Ascending aorta (tissue), 2 donors: ENCODE measurements at regions of chr12 and their contacts with region 1.

Region 1: GRCh38 chr12:11576104-11576503 is 73.4 kb upstream of the ETV6 start:
- DNase-seq: no peak
- H3K4me3 ChIP-seq: no peak overlapping the region
- H3K27ac ChIP-seq: no peak overlapping the region
- H3K4me1 ChIP-seq: peaks cover 6 to 31% of the 10 kb centered on the region in 2 donors
- H3K27me3 ChIP-seq: no peaks in the 10 kb centered on the region
- CTCF ChIP-seq: no peak

Region 2: DNA sequence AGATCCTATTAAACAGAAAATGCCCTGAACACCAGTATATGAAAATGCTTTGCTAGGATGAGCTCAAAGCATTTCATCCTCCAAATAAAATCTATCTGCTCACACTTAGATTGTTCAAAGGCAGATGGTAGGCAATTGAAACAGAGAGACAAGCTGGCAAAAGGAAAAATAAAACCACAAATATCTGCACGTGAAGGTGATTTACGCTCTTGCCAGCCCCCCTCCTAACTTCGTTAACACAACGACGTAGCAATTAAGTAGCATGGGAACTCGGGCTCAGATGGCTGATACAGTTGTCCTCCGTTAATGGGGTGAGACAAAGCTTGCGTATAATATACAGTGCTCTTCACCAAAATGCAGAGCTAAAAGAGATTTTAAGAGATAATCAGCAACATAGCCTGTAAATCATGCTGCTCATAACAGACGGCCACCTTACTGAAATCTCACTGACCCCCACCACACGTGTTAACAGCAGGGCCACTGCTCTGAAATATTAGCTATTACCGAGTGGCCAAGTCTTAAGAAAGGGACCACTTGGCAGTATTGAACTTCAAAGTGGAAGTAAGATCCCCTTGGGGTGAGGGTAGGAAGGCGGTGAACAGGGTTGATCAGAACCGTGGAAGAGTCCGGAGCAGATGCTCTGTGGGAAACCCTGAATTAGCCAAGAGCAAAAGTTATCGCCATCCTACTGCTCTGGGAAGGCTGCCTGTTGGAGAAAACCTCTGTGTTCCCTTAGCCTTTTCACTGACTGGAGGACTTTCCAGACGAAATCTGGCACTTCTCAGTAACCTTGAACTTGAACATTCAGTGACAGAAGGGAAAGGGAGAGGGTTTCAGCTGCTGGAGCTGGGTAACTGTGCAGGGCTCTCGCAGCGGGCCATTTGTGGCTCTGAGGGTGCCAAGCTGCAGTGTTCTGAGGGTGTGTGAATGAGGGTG is 96.4 kb after region 1 on chr12:
- intact Hi-C with region 1: no loop called
- DNase-seq: no peak
- H3K4me3 ChIP-seq: peak overlapping the region; percentile 17 to 31
- H3K27ac ChIP-seq: peak overlapping the region; percentile 38 to 51
- H3K4me1 ChIP-seq: peaks cover 4 to 52% of the 10 kb centered on the region in 2 donors
- H3K27me3 ChIP-seq: no peaks in the 10 kb centered on the region
- CTCF ChIP-seq: no peak

Region 3: GRCh38 chr12:12356886-12357718 is 781.0 kb after region 1 on chr12 and contains the start of gene BORCS5:
- intact Hi-C with region 1: loop called (anchors 10 kb)
- DNase-seq: peak; percentile 92 to 99
- H3K4me3 ChIP-seq: peak within 1 kb of the TSS; percentile 74 to 82
- H3K27ac ChIP-seq: peak within 1 kb of the TSS; percentile 91 to 98
- H3K4me1 ChIP-seq: peaks cover 0 to 14% of the 10 kb centered on the region in 2 donors
- H3K27me3 ChIP-seq: no peaks in the 10 kb centered on the region
- CTCF ChIP-seq: peak in 2 of 3 experiments; percentile 21 to 24
- total RNA-seq, gene BORCS5: 3.0 TPM

Region 4: GRCh38 chr12:12716793-12717585 is 1140.9 kb after region 1 on chr12 and contains the start of gene CDKN1B:
- intact Hi-C with region 1: loop called (anchors 10 kb)
- DNase-seq: peak; percentile 76 to 96
- H3K4me3 ChIP-seq: peak within 1 kb of the TSS; percentile 75 to 88
- H3K27ac ChIP-seq: peak within 1 kb of the TSS; percentile 96 to 99
- H3K4me1 ChIP-seq: peaks cover 3 to 34% of the 10 kb centered on the region in 2 donors
- H3K27me3 ChIP-seq: no peaks in the 10 kb centered on the region
- CTCF ChIP-seq: no peak
- total RNA-seq, gene CDKN1B: 65.1 TPM